Gastrocnemius medialis (tissue), 4 donors: ENCODE measurements at regions of chr2 and their contacts with region 1.

Region 1: DNA sequence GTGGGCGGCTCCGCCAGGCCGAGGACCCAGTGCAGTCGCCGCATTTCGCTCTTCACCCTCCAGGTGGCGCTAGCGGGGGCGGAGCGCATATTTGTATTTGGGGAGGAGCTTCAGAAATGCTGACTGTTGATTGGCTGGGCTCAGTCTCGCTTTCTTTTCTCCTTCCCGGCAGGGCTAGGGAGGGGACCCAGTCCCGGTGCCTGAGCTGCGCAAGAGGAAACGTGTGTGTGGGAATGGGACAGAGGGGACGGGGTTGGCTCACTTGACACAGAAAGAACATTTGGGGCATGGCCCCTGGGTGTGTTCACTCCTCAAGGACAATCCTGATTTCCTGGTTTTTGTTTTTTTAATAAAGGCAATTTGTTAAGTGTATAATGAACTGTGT is 20.3 kb upstream of the DNMT3A start:
- DNase-seq: peak; percentile 85 to 88
- ATAC-seq: peak; percentile 99 to 100
- H3K4me3 ChIP-seq: peak overlapping the region; percentile 35 to 55 (median 50)
- H3K27ac ChIP-seq: peak overlapping the region; percentile 50 to 73 (median 68)
- H3K4me1 ChIP-seq: peaks cover 6 to 7% of the 10 kb centered on the region in 2 donors
- H3K27me3 ChIP-seq: no peaks in the 10 kb centered on the region
- CTCF ChIP-seq: peak; percentile 79 to 99 (median 94)
- POLR2A ChIP-seq: peak; percentile 53 to 67

Region 2: GRCh38 chr2:25228848-25229278 is 133.2 kb before region 1 on chr2:
- in situ Hi-C with region 1: no loop called
- intact Hi-C with region 1: no loop called
- DNase-seq: peak; percentile 36 to 45
- ATAC-seq: peak; percentile 60 to 70
- H3K4me3 ChIP-seq: no peak overlapping the region
- H3K27ac ChIP-seq: peak overlapping the region; percentile 24 to 68 (median 54)
- H3K4me1 ChIP-seq: peaks cover 0 to 3% of the 10 kb centered on the region in 2 donors
- H3K27me3 ChIP-seq: no peaks in the 10 kb centered on the region
- CTCF ChIP-seq: peak in 4 of 5 experiments; percentile 31 to 67 (median 56)
- POLR2A ChIP-seq: no peak

Region 3: GRCh38 chr2:25376750-25377621 is 14.9 kb after region 1 on chr2:
- in situ Hi-C with region 1: no loop called
- intact Hi-C with region 1: loop called (anchors 1 kb)
- DNase-seq: peak; percentile 77 to 87
- ATAC-seq: peak; percentile 69 to 74
- H3K4me3 ChIP-seq: peak overlapping the region in 3 of 4 donors; percentile 34 to 53 (median 35)
- H3K27ac ChIP-seq: peak overlapping the region; percentile 38 to 53 (median 40)
- H3K4me1 ChIP-seq: peaks cover 41 to 43% of the 10 kb centered on the region in 2 donors
- H3K27me3 ChIP-seq: no peaks in the 10 kb centered on the region
- CTCF ChIP-seq: peak; percentile 89 to 97 (median 96)
- POLR2A ChIP-seq: no peak

Region 4: GRCh38 chr2:25521665-25522387 is 159.8 kb after region 1 on chr2:
- in situ Hi-C with region 1: no loop called
- intact Hi-C with region 1: loop called (anchors 1 kb)
- DNase-seq: no peak
- ATAC-seq: peak; percentile 62 to 74
- H3K4me3 ChIP-seq: peak overlapping the region; percentile 11 to 38 (median 24)
- H3K27ac ChIP-seq: no peak overlapping the region
- H3K4me1 ChIP-seq: peaks cover 0 to 7% of the 10 kb centered on the region in 2 donors
- H3K27me3 ChIP-seq: no peaks in the 10 kb centered on the region
- CTCF ChIP-seq: peak; percentile 58 to 75 (median 69)
- POLR2A ChIP-seq: no peak